ENCODE measurements at regions of chr1 and their contacts with region 1.

Region 1: DNA sequence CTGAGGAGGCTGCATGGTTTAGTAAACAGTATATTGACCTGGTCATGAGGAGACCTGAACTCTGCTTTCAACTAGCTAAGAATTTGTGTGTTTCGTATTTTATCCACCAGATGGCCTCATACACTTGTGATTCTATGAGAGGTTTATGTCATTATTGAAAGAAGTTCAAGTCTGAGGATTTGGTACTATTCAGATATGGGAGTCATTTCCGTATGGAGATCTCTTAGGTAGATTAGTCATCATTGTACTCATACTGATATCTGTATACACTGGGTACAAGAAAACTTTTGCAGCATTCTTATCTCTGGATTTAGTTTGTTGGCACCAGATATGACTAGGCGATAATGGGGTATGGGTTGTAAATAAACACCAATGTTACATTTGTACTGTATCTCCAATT is 26.6 kb downstream of the ATF6 start:
- DNase-seq: peak in 1 of 2 donors; percentile 67
- ATAC-seq: peak; percentile 46 to 57 (median 54)
- H3K4me3 ChIP-seq: no peak overlapping the region
- H3K4me3 Mint-ChIP-seq: no peak overlapping the region
- H3K27ac ChIP-seq: no peak overlapping the region
- H3K27ac Mint-ChIP-seq: no peak overlapping the region
- H3K4me1 ChIP-seq: no peaks in the 10 kb centered on the region
- H3K4me1 Mint-ChIP-seq: peaks cover 0 to 4% of the 10 kb centered on the region in 2 donors
- H3K27me3 ChIP-seq: no peaks in the 10 kb centered on the region
- H3K27me3 Mint-ChIP-seq: no peaks in the 10 kb centered on the region
- CTCF ChIP-seq: peak; percentile 53

Region 2: DNA sequence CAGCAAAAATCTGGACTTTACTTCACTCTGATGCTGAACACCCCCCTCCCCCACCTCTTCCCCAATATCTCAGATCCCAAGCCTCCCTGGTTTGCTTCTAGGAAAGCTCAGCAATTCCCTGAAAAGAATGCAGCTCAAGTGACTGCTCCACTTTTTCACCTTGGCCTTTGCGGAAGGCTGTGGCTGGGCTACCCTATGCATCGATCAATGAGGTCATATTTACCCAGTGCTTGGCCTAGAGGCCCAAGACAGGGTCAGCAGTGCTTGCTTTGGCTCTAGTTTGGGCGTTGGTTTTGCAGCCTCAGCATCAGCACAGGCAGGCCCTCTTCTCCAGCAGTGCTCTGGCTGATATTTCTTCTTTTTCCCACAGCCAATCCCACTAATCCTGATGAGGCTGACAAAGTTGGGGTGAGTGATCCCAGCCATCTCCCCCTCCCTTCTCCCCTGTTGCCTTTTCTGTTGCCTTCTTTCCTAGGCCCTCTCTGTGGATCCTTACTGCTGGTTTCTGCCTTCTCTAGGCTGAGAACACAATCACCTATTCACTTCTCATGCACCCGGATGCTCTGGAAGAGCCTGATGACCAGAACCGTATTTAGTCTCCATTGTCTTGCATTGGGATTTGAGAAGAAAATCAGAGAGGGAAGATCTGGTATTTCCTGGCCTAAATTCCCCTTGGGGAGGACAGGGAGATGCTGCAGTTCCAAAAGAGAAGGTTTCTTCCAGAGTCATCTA is 115.6 kb before region 1 on chr1:
- intact Hi-C with region 1: no loop called
- DNase-seq: no peak
- ATAC-seq: no peak
- H3K4me3 ChIP-seq: no peak overlapping the region
- H3K4me3 Mint-ChIP-seq: no peak overlapping the region
- H3K27ac ChIP-seq: no peak overlapping the region
- H3K27ac Mint-ChIP-seq: no peak overlapping the region
- H3K4me1 ChIP-seq: no peaks in the 10 kb centered on the region
- H3K4me1 Mint-ChIP-seq: no peaks in the 10 kb centered on the region
- H3K27me3 ChIP-seq: no peaks in the 10 kb centered on the region
- H3K27me3 Mint-ChIP-seq: peaks cover 0 to 4% of the 10 kb centered on the region in 2 donors
- CTCF ChIP-seq: no peak

Region 3: DNA sequence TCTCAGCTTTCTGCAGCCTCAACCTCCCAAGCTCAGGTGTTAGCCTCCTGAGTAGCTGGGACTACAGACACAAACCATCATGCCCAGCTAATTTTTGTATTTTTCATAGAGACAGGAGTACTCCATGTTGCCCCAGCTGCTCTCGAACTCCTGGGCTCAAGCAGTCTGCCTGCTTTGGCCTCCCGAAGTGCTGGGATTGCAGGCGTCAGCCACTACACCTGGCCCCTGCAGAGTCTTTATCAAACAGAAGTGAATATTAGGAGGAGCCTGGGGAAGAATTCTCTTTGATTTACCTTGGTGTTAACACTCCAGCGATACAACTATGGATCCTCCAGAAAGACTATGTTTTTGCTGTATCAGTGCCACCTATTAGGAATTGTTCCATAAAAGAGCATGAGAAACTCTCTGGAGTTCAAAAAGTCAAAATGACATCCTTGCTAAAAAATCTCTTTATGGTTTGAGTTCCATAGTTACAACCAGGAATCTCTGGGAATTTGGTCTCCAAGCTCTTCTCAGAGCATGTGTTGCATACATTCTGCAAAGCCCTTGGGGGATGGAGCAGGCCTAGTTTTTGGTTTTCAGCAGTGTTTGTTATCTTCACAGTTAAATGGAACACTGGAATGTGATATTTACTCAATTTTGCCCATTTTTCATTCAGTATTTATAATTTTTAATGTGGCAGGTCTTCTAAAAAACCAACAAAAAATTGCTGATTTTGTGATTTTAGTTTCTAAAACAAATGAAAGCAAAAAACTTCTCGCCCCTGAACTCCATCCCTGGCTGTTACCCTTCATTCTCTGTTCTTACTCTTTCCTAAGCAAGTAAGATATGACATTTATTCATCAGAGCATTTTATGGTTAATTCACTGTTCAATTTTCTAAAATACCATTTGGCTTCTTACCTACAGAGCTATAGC is 153.6 kb after region 1 on chr1:
- intact Hi-C with region 1: no loop called
- DNase-seq: no peak
- ATAC-seq: no peak
- H3K4me3 ChIP-seq: no peak overlapping the region
- H3K4me3 Mint-ChIP-seq: no peak overlapping the region
- H3K27ac ChIP-seq: no peak overlapping the region
- H3K27ac Mint-ChIP-seq: no peak overlapping the region
- H3K4me1 ChIP-seq: no peaks in the 10 kb centered on the region
- H3K4me1 Mint-ChIP-seq: no peaks in the 10 kb centered on the region
- H3K27me3 ChIP-seq: no peaks in the 10 kb centered on the region
- H3K27me3 Mint-ChIP-seq: no peaks in the 10 kb centered on the region
- CTCF ChIP-seq: no peak

Region 4: GRCh38 chr1:162040681-162041080 is 247.9 kb after region 1 on chr1:
- intact Hi-C with region 1: loop called (anchors 1 kb)
- DNase-seq: peak in 1 of 2 donors; percentile 16
- ATAC-seq: no peak
- H3K4me3 ChIP-seq: no peak overlapping the region
- H3K4me3 Mint-ChIP-seq: no peak overlapping the region
- H3K27ac ChIP-seq: no peak overlapping the region
- H3K27ac Mint-ChIP-seq: no peak overlapping the region
- H3K4me1 ChIP-seq: no peaks in the 10 kb centered on the region
- H3K4me1 Mint-ChIP-seq: peaks cover 0 to 4% of the 10 kb centered on the region in 2 donors
- H3K27me3 ChIP-seq: peaks cover 3% of the 10 kb centered on the region
- H3K27me3 Mint-ChIP-seq: peaks cover 20 to 44% of the 10 kb centered on the region in 2 donors
- CTCF ChIP-seq: no peak

Region 5: GRCh38 chr1:162391790-162392563 is 599.2 kb after region 1 on chr1:
- intact Hi-C with region 1: loop called (anchors 10 kb)
- DNase-seq: peak in 1 of 2 donors; percentile 45
- ATAC-seq: peak in 2 of 3 donors; percentile 62 to 77
- H3K4me3 ChIP-seq: no peak overlapping the region
- H3K4me3 Mint-ChIP-seq: no peak overlapping the region
- H3K27ac ChIP-seq: no peak overlapping the region
- H3K27ac Mint-ChIP-seq: peak overlapping the region; percentile 83 to 89
- H3K4me1 ChIP-seq: peaks cover 30% of the 10 kb centered on the region
- H3K4me1 Mint-ChIP-seq: peaks cover 60 to 67% of the 10 kb centered on the region in 2 donors
- H3K27me3 ChIP-seq: no peaks in the 10 kb centered on the region
- H3K27me3 Mint-ChIP-seq: no peaks in the 10 kb centered on the region
- CTCF ChIP-seq: peak; percentile 73